ENCODE measurements at regions of chr7 and their contacts with region 1.

Region 1: DNA sequence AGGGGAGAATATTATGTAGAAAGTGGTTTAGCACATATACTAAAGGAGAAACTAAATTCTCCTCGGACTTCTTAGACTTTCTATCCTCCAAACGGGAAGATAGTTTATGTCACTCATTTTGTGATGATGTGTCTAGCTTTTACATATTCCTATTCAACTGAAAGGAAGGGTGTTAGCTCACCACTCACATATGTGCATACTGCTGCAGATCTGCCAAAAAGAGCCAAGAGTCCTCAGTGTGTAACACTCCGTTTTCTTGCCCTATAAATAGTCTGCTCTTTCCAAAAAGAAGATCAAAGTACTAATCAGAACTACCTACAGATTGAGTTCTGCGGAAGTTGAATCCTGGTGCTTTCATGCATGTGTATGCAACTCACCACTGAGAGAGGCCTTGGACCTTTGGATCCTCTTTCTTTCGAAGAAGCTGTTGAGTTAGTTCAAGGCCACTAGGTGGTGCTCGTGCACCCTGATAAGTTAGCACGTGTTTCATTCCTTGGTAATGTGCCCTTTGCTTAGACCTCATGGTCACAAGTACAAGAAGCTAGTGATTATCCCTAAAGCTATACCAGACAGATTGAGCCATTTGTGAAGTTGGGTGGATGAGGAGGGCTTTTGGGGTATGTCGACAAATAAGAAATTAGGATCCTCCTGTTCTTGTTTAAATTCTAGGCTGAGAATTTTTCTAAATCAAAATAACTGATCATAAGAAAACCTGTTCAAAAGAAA is 14.1 kb downstream of the YAE1 start:
- DNase-seq: peak; percentile 82
- CTCF ChIP-seq: peak; percentile 83

Region 2: DNA sequence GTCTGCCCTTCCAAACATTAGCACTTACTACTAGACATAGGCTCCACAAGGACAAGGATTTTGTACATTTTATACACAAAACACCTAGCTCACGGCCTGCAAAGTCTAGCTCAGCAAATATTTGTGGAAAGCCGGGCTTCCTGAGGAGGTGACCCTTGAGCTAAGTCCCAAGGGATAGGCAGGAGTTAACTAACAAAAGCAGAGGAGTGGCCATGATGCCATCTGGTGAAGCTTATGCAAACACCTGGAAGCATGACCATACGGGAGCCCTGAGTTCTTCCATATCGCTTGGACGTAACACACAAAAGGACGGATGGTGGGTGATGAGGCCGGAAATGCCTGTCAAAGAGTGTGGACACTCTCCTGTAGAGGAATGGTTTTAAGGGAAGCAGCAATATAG is 40.0 kb before region 1 on chr7:
- CTCF ChIA-PET with region 1: no interaction called
- POLR2A ChIA-PET with region 1: no interaction called
- DNase-seq: no peak
- CTCF ChIP-seq: no peak

Region 3: GRCh38 chr7:39594988-39595620 is 14.8 kb after region 1 on chr7:
- CTCF ChIA-PET with region 1: interaction called, 53 read pairs
- POLR2A ChIA-PET with region 1: no interaction called
- DNase-seq: no peak
- CTCF ChIP-seq: no peak

Region 4: GRCh38 chr7:39616138-39616537 is 35.8 kb after region 1 on chr7:
- CTCF ChIA-PET with region 1: interaction called, 24 read pairs
- POLR2A ChIA-PET with region 1: interaction called, 3 read pairs
- DNase-seq: no peak
- CTCF ChIP-seq: no peak

Region 5: DNA sequence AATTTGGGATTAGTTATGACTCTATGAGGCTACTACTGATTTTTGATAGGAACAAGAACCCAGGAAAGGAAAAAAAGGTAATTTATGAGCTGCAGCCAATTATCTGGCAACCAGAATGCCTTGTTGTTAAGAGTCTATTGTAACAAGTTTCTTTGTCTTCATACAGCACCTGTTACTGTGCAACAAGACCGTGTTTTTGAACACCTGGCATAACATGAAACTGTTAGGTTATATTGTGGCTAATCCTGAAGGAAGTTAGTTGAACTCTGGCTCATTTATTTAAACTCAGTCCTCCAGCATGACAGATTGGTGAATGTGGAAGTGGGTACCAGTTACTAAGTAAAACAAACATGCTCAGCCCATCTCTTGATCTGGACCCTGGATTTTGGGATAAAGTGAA is 76.1 kb after region 1 on chr7:
- CTCF ChIA-PET with region 1: interaction called, 11 read pairs
- POLR2A ChIA-PET with region 1: no interaction called
- DNase-seq: no peak
- CTCF ChIP-seq: no peak

Region 6: GRCh38 chr7:39746103-39746819 is 165.9 kb after region 1 on chr7:
- CTCF ChIA-PET with region 1: interaction called, 464 read pairs
- POLR2A ChIA-PET with region 1: no interaction called
- DNase-seq: peak; percentile 76
- CTCF ChIP-seq: peak; percentile 83

Region 7: DNA sequence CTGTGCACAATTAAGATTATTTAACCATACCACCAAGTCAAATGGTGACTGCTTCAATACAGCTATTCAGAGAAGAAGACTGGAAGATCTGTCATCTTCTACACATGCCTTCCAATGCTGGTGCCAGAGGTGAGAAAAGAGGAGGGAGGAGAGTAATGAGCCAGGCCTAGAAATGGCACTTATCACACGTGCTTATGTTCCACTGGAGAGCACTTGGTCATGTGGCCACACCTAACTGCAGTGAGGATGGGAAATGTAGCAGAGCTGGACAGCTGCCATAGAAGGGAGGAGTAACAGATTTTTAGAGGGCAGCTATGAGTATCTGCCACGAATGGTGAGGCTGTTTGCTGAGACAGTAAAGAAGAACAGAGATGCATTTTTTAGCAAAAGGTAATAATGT is 477.0 kb after region 1 on chr7:
- CTCF ChIA-PET with region 1: interaction called, 30 read pairs
- POLR2A ChIA-PET with region 1: no interaction called
- DNase-seq: no peak
- CTCF ChIP-seq: no peak

Measured in GM10248 (cell line).